KBM-7 (cell line): ENCODE measurements at regions of chr6 and their contacts with region 1.

Region 1: GRCh38 chr6:107132330-107132954 is 17.1 kb upstream of the BEND3 start:
- DNase-seq: peak; percentile 45

Region 2: GRCh38 chr6:106783631-106784566 is 348.5 kb before region 1 on chr6:
- in situ Hi-C with region 1: no loop called
- DNase-seq: no peak

Region 3: GRCh38 chr6:107218142-107218541 is 85.7 kb after region 1 on chr6:
- in situ Hi-C with region 1: no loop called
- DNase-seq: no peak

Region 4: DNA sequence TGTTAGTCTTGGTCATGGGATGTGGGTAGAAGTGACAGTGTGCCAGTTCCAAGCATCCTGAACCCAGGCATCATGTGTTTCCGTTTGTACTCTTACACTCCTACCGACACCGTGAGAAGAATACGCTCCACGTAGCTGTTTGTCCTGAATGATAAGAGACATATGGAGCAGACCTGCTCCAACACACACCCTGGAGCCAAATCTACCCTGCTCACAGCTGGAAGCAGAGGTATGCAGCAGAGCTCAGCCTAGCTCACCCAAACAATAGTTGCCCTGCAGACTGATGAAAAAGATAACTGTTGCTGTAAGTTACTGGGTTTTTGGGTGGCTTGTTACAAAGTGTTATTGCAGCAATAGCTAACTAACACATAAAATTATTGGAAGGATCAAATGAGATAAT is 341.2 kb after region 1 on chr6:
- in situ Hi-C with region 1: no loop called
- DNase-seq: no peak

Region 5: DNA sequence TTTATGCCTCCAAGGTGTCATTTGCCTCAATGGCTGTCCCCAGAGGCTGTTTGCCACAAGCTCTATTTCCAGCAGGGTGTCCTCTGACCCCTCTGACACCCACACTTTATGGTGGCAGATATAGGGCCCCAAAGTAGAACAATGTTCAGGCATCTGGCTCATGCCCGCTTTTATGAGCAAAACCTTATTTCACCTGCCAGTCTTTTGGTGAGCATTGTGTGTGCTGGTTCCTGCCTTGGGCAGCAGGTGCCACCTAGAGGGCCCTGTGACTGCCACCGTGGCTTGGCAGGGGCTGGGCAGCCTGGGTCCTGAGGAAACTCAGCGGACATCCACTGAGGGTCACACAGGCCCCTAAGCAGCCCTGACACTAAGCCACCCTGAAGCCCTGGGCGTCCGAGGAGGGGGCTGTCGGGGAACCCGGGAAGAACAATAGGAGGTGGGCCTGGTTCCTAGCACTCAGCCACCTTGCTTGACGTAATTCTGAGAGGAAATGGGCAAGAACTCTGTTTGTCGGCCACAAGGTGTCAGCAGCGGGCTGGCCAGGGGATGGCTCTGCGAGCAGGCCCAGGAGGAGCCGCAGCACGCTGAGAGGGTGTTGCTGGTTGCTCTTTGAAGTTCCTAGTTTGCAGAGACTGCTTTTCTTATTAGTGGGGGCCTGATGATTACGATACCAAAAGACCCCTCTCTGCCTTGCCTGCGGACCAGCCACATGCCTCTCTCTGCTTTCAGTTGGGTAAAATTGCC is 542.7 kb after region 1 on chr6:
- in situ Hi-C with region 1: loop called (anchors 25 kb)
- DNase-seq: peak; percentile 82